K562 (cell line): ENCODE measurements at regions of chr1 and their contacts with region 1.

Region 1: GRCh38 chr1:60969971-60970509 is 112.3 kb upstream of the NFIA start:
- DNase-seq: peak in 2 of 4 experiments; percentile 52 to 55
- ATAC-seq: peak; percentile 83
- H3K4me3 ChIP-seq: no peak overlapping the region
- H3K27ac ChIP-seq: no peak overlapping the region
- H3K4me1 ChIP-seq: peaks cover 3 to 19% of the 10 kb centered on the region in 2 experiments; a peak in 4 of 5 replicates
- H3K27me3 ChIP-seq: no peaks in the 10 kb centered on the region
- CTCF ChIP-seq: peak; percentile 45 to 74 (median 67); a peak in 5 of 6 replicates
- EP300 ChIP-seq: no peak
- POLR2A ChIP-seq: no peak
- RAD21 ChIP-seq: peak; percentile 76 to 89

Region 2: GRCh38 chr1:60620087-60620486 is 350.0 kb before region 1 on chr1:
- CTCF ChIA-PET with region 1: no interaction called
- POLR2A ChIA-PET with region 1: no interaction called
- in situ Hi-C with region 1: no loop called
- intact Hi-C with region 1: no loop called
- DNase-seq: no peak
- ATAC-seq: no peak
- H3K4me3 ChIP-seq: no peak overlapping the region
- H3K27ac ChIP-seq: no peak overlapping the region
- H3K4me1 ChIP-seq: no peaks in the 10 kb centered on the region
- H3K27me3 ChIP-seq: no peaks in the 10 kb centered on the region
- CTCF ChIP-seq: no peak
- EP300 ChIP-seq: no peak
- POLR2A ChIP-seq: no peak
- RAD21 ChIP-seq: no peak

Region 3: GRCh38 chr1:60848583-60849188 is 121.4 kb before region 1 on chr1:
- CTCF ChIA-PET with region 1: no interaction called
- POLR2A ChIA-PET with region 1: no interaction called
- in situ Hi-C with region 1: no loop called
- intact Hi-C with region 1: loop called (anchors 2 kb)
- DNase-seq: peak in 2 of 4 experiments; percentile 19 to 53
- ATAC-seq: peak; percentile 90
- H3K4me3 ChIP-seq: no peak overlapping the region
- H3K27ac ChIP-seq: no peak overlapping the region
- H3K4me1 ChIP-seq: no peaks in the 10 kb centered on the region
- H3K27me3 ChIP-seq: no peaks in the 10 kb centered on the region
- CTCF ChIP-seq: peak; percentile 43 to 67 (median 54); a peak in 5 of 6 replicates
- EP300 ChIP-seq: peak; percentile 70
- POLR2A ChIP-seq: no peak
- RAD21 ChIP-seq: peak; percentile 67 to 80

Region 4: GRCh38 chr1:61071205-61072130 is 101.4 kb after region 1 on chr1:
- CTCF ChIA-PET with region 1: no interaction called
- POLR2A ChIA-PET with region 1: no interaction called
- in situ Hi-C with region 1: no loop called
- intact Hi-C with region 1: no loop called
- DNase-seq: no peak
- ATAC-seq: no peak
- H3K4me3 ChIP-seq: no peak overlapping the region
- H3K27ac ChIP-seq: no peak overlapping the region
- H3K4me1 ChIP-seq: peaks cover 4 to 22% of the 10 kb centered on the region in 2 experiments; a peak in 4 of 5 replicates
- H3K27me3 ChIP-seq: no peaks in the 10 kb centered on the region
- CTCF ChIP-seq: no peak
- EP300 ChIP-seq: no peak
- POLR2A ChIP-seq: no peak
- RAD21 ChIP-seq: no peak

Region 5: GRCh38 chr1:61659061-61659460 is 689.0 kb after region 1 on chr1:
- CTCF ChIA-PET with region 1: no interaction called
- POLR2A ChIA-PET with region 1: no interaction called
- in situ Hi-C with region 1: no loop called
- intact Hi-C with region 1: loop called (anchors 5 kb)
- DNase-seq: peak in 2 of 4 experiments; percentile 9 to 14
- ATAC-seq: peak; percentile 45; the same call in 1 of the 3 replicates
- H3K4me3 ChIP-seq: no peak overlapping the region
- H3K27ac ChIP-seq: no peak overlapping the region
- H3K4me1 ChIP-seq: peaks cover 0 to 5% of the 10 kb centered on the region in 2 experiments; a peak in 2 of 5 replicates
- H3K27me3 ChIP-seq: peaks cover 0 to 20% of the 10 kb centered on the region in 2 experiments; a peak in 2 of 5 replicates
- CTCF ChIP-seq: peak in 2 of 3 experiments; percentile 36 to 42; a peak in 4 of 6 replicates
- EP300 ChIP-seq: no peak
- POLR2A ChIP-seq: no peak
- RAD21 ChIP-seq: peak in 1 of 2 experiments; percentile 46; a peak in 2 of 4 replicates